ENCODE measurements at regions of chr22 and their contacts with region 1.

Region 1: DNA sequence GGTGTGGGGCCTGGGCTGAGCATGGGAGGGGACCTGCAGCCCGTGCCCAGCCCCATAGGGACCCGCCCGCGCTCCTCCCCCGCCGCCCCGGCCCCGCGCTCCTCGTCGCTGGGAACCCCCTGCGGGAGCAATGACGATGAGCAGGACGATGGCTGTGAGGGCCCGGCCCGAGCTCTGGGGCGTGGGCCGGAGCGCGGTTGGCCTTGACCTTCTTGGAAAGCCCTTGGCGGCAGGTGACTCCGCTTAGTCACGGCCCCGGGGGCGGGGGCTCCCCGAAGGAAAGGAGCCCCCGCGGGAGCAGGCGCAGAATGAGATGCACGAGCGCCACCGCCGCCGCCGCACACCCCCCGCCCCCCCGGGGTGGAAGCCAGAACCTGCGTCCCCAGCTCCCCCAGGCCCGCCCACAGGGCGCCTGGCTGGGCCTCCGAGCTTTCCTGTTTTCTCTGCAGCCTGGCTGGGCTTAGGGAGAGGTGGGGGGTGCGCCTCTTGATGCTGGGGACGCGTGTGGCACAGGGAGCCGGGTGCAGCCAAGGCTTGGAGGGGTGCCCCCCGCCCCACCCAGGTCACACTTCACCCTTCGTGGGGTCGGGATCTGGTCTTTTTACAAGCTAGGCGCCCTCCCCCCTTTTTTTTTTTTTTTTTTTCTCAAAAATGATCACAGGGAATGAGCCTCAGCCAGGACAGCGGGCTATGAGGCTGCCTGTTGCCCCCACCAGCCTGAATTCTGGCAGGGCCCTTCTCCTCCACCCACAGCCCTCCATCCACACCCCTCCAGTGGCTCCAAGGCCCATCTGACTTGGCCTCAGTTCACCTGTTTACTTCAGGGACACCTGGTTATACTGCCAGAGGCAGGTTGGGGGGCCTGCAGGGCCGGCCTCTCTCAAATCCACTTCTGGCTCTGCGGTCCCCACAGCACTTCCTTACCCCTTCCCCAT is 17.9 kb downstream of the CRELD2 start:
- DNase-seq: peak; percentile 98 to 99 (median 99)
- H3K4me3 ChIP-seq: peak overlapping the region; percentile 0 to 68 (median 39)
- H3K4me3 Mint-ChIP-seq: peak overlapping the region; percentile 63 to 72
- H3K27ac ChIP-seq: peak overlapping the region; percentile 84 to 92
- H3K27ac Mint-ChIP-seq: peak overlapping the region; percentile 77 to 93 (median 87)
- H3K4me1 ChIP-seq: peaks cover 39 to 43% of the 10 kb centered on the region in 2 donors
- H3K4me1 Mint-ChIP-seq: peaks cover 28% of the 10 kb centered on the region
- H3K27me3 ChIP-seq: no peaks in the 10 kb centered on the region
- H3K27me3 Mint-ChIP-seq: peaks cover 0 to 8% (median 6%) of the 10 kb centered on the region in 3 donors
- CTCF ChIP-seq: no peak

Region 2: DNA sequence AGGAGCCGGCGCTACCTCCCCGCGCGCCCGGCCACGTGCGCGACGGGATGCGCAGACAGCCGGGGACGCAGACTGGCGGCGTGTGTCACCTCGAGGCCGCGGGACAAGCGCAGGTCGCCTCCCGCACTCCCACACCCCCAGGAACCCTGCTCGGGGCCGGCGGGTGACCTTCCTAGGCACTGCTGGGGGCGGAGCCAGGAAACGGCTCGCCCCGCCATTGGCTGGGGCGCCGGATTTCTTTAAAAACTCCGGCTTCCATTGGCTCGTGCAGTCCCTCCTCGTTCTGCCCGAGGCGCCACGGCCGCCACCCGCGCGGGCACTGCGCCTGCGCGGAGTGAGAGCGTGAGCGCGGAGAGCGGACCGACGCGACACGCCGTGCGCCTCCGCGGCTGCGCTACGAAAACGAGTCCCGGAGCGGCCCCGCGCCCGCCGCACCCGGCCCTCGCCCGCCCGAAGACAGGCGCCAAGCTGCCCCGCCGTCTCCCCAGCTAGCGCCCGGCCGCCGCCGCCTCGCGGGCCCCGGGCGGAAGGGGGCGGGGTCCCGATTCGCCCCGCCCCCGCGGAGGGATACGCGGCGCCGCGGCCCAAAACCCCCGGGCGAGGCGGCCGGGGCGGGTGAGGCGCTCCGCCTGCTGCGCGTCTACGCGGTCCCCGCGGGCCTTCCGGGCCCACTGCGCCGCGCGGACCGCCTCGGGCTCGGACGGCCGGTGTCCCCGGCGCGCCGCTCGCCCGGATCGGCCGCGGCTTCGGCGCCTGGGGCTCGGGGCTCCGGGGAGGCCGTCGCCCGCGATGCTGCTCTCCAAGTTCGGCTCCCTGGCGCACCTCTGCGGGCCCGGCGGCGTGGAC is 24.1 kb after region 1 on chr22 and contains the start of gene PIM3:
- intact Hi-C with region 1: loop called in 1 of 2 experiments (anchors 1 kb)
- DNase-seq: peak; percentile 96 to 98 (median 97)
- H3K4me3 ChIP-seq: peak within 1 kb of the TSS; percentile 80 to 97 (median 94)
- H3K4me3 Mint-ChIP-seq: peak within 1 kb of the TSS; percentile 90 to 95
- H3K27ac ChIP-seq: peak within 1 kb of the TSS; percentile 91 to 99
- H3K27ac Mint-ChIP-seq: peak within 1 kb of the TSS; percentile 89 to 95 (median 91)
- H3K4me1 ChIP-seq: peaks cover 38 to 47% of the 10 kb centered on the region in 2 donors
- H3K4me1 Mint-ChIP-seq: peaks cover 34% of the 10 kb centered on the region
- H3K27me3 ChIP-seq: no peaks in the 10 kb centered on the region
- H3K27me3 Mint-ChIP-seq: peaks cover 0 to 1% (median 0%) of the 10 kb centered on the region in 3 donors
- CTCF ChIP-seq: no peak
- polyA plus RNA-seq, gene PIM3: 38.8 to 135 (median 40.4) TPM

Region 3: DNA sequence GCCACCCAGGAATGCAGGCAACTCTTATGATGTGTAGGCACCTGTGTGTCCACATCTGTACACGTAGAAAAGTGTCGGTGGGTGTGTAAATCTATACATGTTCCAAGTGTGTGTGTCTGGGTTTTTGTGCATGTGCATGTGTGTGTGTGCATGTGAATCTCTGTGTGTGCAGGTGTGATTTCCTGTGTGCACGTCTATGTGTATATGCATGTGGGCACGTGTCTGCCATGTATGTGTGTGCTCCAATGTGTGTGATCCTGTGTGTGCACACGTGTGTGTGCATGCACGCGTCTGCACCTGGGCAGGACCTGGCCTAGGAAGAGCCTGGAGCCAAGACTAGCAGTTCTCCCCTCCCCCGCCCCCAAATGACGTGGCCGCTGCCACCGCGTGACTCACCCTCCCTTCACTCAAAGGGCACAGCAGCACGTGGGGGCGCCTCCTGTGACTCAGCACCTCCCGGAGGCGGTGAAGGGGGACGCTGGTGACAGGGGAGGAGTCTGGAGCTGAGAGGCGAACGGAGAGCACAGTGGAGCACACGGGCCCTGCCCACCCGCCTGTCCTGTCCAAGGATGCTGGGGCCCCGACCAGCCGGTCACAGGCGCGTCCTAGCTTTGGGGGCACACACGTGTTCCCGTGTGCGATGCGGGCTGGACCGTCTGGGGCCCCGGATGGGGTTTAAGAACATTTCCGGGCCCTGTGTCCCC is 34.4 kb after region 1 on chr22:
- intact Hi-C with region 1: loop called in 1 of 2 experiments (anchors 2 kb)
- DNase-seq: peak; percentile 96 to 99 (median 98)
- H3K4me3 ChIP-seq: peak overlapping the region; percentile 11 to 75 (median 41)
- H3K4me3 Mint-ChIP-seq: peak overlapping the region; percentile 80 to 85
- H3K27ac ChIP-seq: peak overlapping the region; percentile 80 to 87
- H3K27ac Mint-ChIP-seq: peak overlapping the region; percentile 87 to 96 (median 93)
- H3K4me1 ChIP-seq: peaks cover 51 to 62% of the 10 kb centered on the region in 2 donors
- H3K4me1 Mint-ChIP-seq: peaks cover 43% of the 10 kb centered on the region
- H3K27me3 ChIP-seq: peaks cover 0 to 10% of the 10 kb centered on the region in 2 donors
- H3K27me3 Mint-ChIP-seq: peaks cover 0 to 9% (median 2%) of the 10 kb centered on the region in 3 donors
- CTCF ChIP-seq: no peak

Region 4: GRCh38 chr22:50185384-50186087 is 249.3 kb after region 1 on chr22 and contains the start of gene TRABD:
- intact Hi-C with region 1: loop called in 1 of 2 experiments (anchors 2 kb)
- DNase-seq: peak; percentile 82 to 87 (median 87)
- H3K4me3 ChIP-seq: peak within 1 kb of the TSS; percentile 56 to 86 (median 58)
- H3K4me3 Mint-ChIP-seq: peak within 1 kb of the TSS; percentile 95
- H3K27ac ChIP-seq: peak within 1 kb of the TSS; percentile 31 to 85
- H3K27ac Mint-ChIP-seq: peak within 1 kb of the TSS; percentile 82 to 96 (median 89)
- H3K4me1 ChIP-seq: peaks cover 56 to 66% of the 10 kb centered on the region in 2 donors
- H3K4me1 Mint-ChIP-seq: peaks cover 46% of the 10 kb centered on the region
- H3K27me3 ChIP-seq: no peaks in the 10 kb centered on the region
- H3K27me3 Mint-ChIP-seq: peaks cover 1 to 5% (median 2%) of the 10 kb centered on the region in 3 donors
- CTCF ChIP-seq: no peak
- polyA plus RNA-seq, gene TRABD: 34.5 to 240 (median 39.3) TPM

Region 5: GRCh38 chr22:50530877-50531545 is 594.7 kb after region 1 on chr22:
- intact Hi-C with region 1: loop called in 1 of 2 experiments (anchors 10 kb)
- DNase-seq: peak; percentile 78 to 88 (median 82)
- H3K4me3 ChIP-seq: peak overlapping the region; percentile 72 to 99 (median 92)
- H3K4me3 Mint-ChIP-seq: peak overlapping the region; percentile 90 to 93
- H3K27ac ChIP-seq: peak overlapping the region; percentile 100
- H3K27ac Mint-ChIP-seq: peak overlapping the region; percentile 99 to 100 (median 99)
- H3K4me1 ChIP-seq: peaks cover 67 to 87% of the 10 kb centered on the region in 2 donors
- H3K4me1 Mint-ChIP-seq: peaks cover 50% of the 10 kb centered on the region
- H3K27me3 ChIP-seq: no peaks in the 10 kb centered on the region
- H3K27me3 Mint-ChIP-seq: no peaks in the 10 kb centered on the region
- CTCF ChIP-seq: no peak

Measured in CD14-positive monocyte (primary cell).